Activated CD8-positive, alpha-beta T cell treated with anti-CD3 and anti-CD28 coated beads, Interleukin-2, amount 10 ng/mL, durations not matched to agents 7 days and 5 days (primary cell): ENCODE measurements at regions of chr6 and their contacts with region 1.

Region 1: GRCh38 chr6:44221291-44221960 is 2.0 kb upstream of the SLC29A1 start:
- DNase-seq: peak; percentile 82
- ATAC-seq: peak; percentile 64
- H3K4me3 Mint-ChIP-seq: no peak overlapping the region
- H3K27ac Mint-ChIP-seq: peak overlapping the region; percentile 3
- H3K4me1 Mint-ChIP-seq: peaks cover 54% of the 10 kb centered on the region
- H3K27me3 Mint-ChIP-seq: peaks cover 9% of the 10 kb centered on the region

Region 2: GRCh38 chr6:44074439-44075136 is 146.8 kb before region 1 on chr6:
- CTCF ChIA-PET with region 1: no interaction called
- POLR2A ChIA-PET with region 1: no interaction called
- DNase-seq: peak; percentile 86
- ATAC-seq: peak; percentile 72
- H3K4me3 Mint-ChIP-seq: peak overlapping the region; percentile 93
- H3K27ac Mint-ChIP-seq: peak overlapping the region; percentile 73
- H3K4me1 Mint-ChIP-seq: peaks cover 25% of the 10 kb centered on the region
- H3K27me3 Mint-ChIP-seq: peaks cover 19% of the 10 kb centered on the region

Region 3: DNA sequence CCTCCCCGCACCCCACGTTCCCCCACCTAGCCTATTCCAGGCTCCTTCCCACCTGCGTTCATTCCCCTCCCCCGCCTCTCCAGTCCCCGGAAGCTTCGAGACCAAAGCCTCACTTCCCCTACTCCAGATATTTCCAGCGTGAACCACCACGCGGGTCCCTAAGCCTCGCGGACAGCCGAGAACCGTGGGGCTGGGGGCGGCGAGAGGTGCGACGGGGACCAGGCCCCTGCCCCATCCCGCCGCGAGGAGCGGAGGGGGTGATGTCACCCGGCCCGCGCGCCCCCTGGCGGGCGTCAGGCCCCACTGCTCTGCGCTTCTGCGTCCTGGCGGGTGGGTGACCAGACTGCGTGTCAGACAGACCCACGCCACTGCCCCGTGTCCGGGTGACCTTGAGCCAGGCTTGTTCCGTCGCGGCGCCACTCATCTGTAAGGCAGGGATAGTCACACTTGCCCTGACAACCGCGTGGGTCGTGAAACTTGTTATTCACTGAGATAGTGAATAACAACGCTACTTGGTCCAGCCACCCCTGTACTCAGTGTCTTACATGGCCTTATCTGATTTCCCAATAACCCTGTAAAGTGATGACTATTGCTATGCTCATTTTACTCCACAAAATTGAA is 16.5 kb after region 1 on chr6:
- CTCF ChIA-PET with region 1: interaction called, 37 read pairs
- POLR2A ChIA-PET with region 1: no interaction called
- DNase-seq: peak; percentile 81
- ATAC-seq: peak; percentile 97
- H3K4me3 Mint-ChIP-seq: peak overlapping the region; percentile 80
- H3K27ac Mint-ChIP-seq: peak overlapping the region; percentile 94
- H3K4me1 Mint-ChIP-seq: peaks cover 32% of the 10 kb centered on the region
- H3K27me3 Mint-ChIP-seq: no peaks in the 10 kb centered on the region

Region 4: DNA sequence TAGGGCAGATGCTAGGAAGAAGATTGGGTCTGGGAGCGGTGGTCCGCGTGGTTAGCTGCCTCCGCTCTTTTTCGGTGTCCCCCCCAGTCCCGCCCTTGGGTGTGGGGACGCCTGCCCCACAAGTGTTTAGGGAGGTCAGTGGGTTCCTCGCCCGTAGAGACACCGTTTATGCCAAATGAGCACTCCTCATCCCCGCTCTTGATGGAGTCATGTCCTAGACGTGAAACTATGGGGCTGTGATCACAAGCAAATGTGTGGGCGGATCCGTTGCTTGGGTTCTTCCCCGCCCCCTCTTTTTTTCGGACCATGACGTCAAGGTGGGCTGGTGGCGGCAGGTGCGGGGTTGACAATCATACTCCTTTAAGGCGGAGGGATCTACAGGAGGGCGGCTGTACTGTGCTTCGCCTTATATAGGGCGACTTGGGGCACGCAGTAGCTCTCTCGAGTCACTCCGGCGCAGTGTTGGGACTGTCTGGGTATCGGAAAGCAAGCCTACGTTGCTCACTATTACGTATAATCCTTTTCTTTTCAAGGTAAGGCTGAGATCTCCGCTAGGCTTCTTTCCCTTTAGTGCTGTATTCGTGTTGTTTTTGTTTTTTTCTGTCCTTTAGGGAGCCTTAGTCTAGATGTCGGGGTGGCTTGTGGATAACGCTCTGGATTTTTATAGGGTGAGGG is 25.4 kb after region 1 on chr6 and contains the start of gene HSP90AB1:
- CTCF ChIA-PET with region 1: interaction called, 8 read pairs
- POLR2A ChIA-PET with region 1: interaction called, 37 read pairs
- DNase-seq: peak; percentile 97
- ATAC-seq: peak; percentile 80
- H3K4me3 Mint-ChIP-seq: peak within 1 kb of the TSS; percentile 98
- H3K27ac Mint-ChIP-seq: peak within 1 kb of the TSS; percentile 99
- H3K4me1 Mint-ChIP-seq: peaks cover 44% of the 10 kb centered on the region
- H3K27me3 Mint-ChIP-seq: no peaks in the 10 kb centered on the region
- total RNA-seq, gene HSP90AB1: 741 to 755 TPM

Region 5: DNA sequence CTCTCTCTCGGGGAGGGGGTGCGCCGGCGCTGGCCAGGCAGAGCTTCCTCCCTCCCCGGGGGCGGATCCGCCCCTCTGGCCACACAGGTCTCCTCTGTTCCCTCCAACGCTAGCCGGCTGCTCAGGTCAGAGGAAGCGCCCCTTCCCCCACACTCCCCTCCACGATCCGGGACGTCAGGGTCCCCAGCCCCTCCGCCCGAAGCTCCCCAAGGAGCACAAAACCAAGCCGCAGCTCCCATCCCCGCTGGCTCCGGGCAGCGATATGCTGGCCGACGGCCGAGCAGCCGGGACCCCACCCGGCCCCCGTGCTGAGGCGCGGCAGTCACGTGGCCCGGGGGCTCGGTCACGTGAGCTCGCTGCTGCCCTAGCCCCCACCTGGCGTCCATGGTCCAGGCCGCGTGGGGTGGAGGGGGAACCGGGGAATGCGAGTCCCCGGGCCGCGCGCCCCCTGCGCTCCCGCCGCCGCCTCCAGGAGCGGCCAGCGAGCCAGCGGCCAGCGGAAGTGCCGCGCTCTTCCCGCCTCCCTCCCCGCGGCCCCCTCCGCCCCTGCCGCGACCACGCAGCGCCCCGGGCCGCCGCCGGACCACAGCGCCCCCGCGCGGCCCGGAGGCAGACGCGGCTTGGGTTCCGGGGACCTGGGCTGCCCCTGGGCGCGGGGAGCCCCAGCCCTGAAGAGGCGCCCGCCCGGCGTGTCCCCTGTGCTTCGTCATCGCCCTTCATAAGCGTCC is 35.8 kb after region 1 on chr6 and contains the start of gene SLC35B2:
- CTCF ChIA-PET with region 1: interaction called, 19 read pairs
- POLR2A ChIA-PET with region 1: interaction called, 5 read pairs
- DNase-seq: peak; percentile 72
- ATAC-seq: peak; percentile 60
- H3K4me3 Mint-ChIP-seq: peak within 1 kb of the TSS; percentile 85
- H3K27ac Mint-ChIP-seq: peak within 1 kb of the TSS; percentile 91
- H3K4me1 Mint-ChIP-seq: peaks cover 57% of the 10 kb centered on the region
- H3K27me3 Mint-ChIP-seq: no peaks in the 10 kb centered on the region
- total RNA-seq, gene SLC35B2: 31.6 to 32.8 TPM